ENCODE measurements at regions of chr2 and their contacts with region 1.

Region 1: GRCh38 chr2:212147921-212148513 is 390.6 kb downstream of the ERBB4 start:
- DNase-seq: peak; percentile 49
- ATAC-seq: no peak
- H3K4me3 ChIP-seq: no peak overlapping the region
- H3K27ac ChIP-seq: no peak overlapping the region
- H3K4me1 ChIP-seq: no peaks in the 10 kb centered on the region
- H3K27me3 ChIP-seq: no peaks in the 10 kb centered on the region
- CTCF ChIP-seq: peak; percentile 76

Region 2: DNA sequence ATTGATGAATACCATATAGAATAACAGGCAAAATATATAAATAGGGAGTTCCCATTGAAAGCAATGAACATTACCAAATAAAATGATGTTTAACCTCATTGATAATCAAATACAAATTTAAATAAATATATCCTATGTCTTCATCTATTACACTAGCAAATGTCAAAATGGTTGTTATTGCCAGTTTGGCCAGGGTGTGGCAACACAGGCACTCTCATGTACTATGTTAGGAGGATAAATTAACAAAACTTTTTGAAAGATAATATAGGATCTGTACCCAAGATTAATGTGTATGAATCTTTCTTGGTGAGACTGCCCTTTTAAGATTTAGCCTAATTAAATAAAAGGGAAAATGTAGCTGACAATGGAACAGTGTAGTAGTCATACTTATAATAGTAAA is 268.7 kb before region 1 on chr2:
- CTCF ChIA-PET with region 1: no interaction called
- POLR2A ChIA-PET with region 1: no interaction called
- intact Hi-C with region 1: loop called (anchors 1 kb)
- DNase-seq: peak; percentile 24
- ATAC-seq: peak; percentile 67
- H3K4me3 ChIP-seq: no peak overlapping the region
- H3K27ac ChIP-seq: no peak overlapping the region
- H3K4me1 ChIP-seq: no peaks in the 10 kb centered on the region
- H3K27me3 ChIP-seq: no peaks in the 10 kb centered on the region
- CTCF ChIP-seq: peak; percentile 48

Region 3: GRCh38 chr2:212005085-212005671 is 142.8 kb before region 1 on chr2:
- CTCF ChIA-PET with region 1: interaction called, 8 read pairs
- POLR2A ChIA-PET with region 1: no interaction called
- intact Hi-C with region 1: loop called (anchors 5 kb)
- DNase-seq: peak; percentile 68
- ATAC-seq: peak; percentile 87
- H3K4me3 ChIP-seq: no peak overlapping the region
- H3K27ac ChIP-seq: no peak overlapping the region
- H3K4me1 ChIP-seq: no peaks in the 10 kb centered on the region
- H3K27me3 ChIP-seq: no peaks in the 10 kb centered on the region
- CTCF ChIP-seq: peak; percentile 82

Region 4: GRCh38 chr2:212520340-212520739 is 372.3 kb after region 1 on chr2:
- CTCF ChIA-PET with region 1: no interaction called
- POLR2A ChIA-PET with region 1: no interaction called
- intact Hi-C with region 1: loop called (anchors 1 kb)
- DNase-seq: peak; percentile 25
- ATAC-seq: peak; percentile 60
- H3K4me3 ChIP-seq: no peak overlapping the region
- H3K27ac ChIP-seq: no peak overlapping the region
- H3K4me1 ChIP-seq: no peaks in the 10 kb centered on the region
- H3K27me3 ChIP-seq: 0 out of 2 replicates have a peak, but pooled peaks cover 3% of the 10 kb centered on the region
- CTCF ChIP-seq: peak; percentile 57

Region 5: GRCh38 chr2:212548450-212548819 is 400.4 kb after region 1 on chr2:
- CTCF ChIA-PET with region 1: interaction called, 3 read pairs
- POLR2A ChIA-PET with region 1: no interaction called
- intact Hi-C with region 1: loop called (anchors 5 kb)
- DNase-seq: peak; percentile 68
- ATAC-seq: peak; percentile 71
- H3K4me3 ChIP-seq: no peak overlapping the region
- H3K27ac ChIP-seq: no peak overlapping the region
- H3K4me1 ChIP-seq: no peaks in the 10 kb centered on the region
- H3K27me3 ChIP-seq: peaks cover 10% of the 10 kb centered on the region; the same call in 1 of the 2 replicates
- CTCF ChIP-seq: peak; percentile 68